Activated B cell treated with CpG ODN at 0.5 μM for 24 hours (primary cell): ENCODE measurements at regions of chr22 and their contacts with region 1.

Region 1: DNA sequence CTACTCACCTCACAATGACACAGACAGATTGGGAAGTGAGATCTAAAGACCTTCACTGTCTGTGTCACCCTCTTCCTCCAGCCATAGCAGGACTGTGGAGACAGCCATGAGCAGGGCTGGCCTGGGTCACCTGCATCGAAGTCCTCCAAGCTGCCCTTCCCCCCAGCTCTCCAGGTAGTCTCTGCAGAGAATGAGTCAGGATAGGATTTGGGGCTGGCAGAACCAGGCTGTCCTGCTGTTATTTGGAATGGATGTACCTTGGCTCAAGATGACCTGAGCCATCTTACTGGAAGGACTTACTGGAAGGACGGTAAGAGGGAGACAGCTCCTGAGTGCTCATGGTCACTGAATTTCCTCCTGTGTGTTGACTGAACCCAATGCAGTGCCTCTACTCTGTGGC is 29.2 kb downstream of the GGTLC2 start:
- DNase-seq: no peak
- ATAC-seq: no peak
- H3K4me3 Mint-ChIP-seq: no peak overlapping the region
- H3K27ac Mint-ChIP-seq: no peak overlapping the region
- H3K4me1 Mint-ChIP-seq: peaks cover 6% of the 10 kb centered on the region
- H3K27me3 Mint-ChIP-seq: peaks cover 2% of the 10 kb centered on the region
- CTCF ChIP-seq: no peak

Region 2: DNA sequence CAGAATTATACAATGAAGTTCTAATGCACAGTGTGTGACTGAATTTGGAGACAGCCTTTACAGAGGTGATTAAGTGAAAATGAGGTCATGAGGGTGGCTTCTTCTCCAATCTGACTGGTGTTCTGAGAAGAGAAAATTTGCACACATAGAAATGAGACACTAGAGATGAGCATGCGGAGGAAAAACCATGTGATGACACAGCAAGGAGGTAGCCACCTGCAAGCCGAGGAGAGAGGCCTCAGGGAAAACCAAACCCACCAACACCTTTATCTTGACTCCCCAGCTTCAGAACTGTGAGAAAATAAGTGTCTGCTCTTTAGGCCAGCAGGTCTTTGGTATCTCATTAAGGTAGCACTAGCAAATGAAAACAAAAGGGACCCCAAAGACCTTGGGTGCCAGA is 64.0 kb after region 1 on chr22:
- CTCF ChIA-PET with region 1: no interaction called
- POLR2A ChIA-PET with region 1: no interaction called
- intact Hi-C with region 1: loop called (anchors 2 kb)
- DNase-seq: no peak
- ATAC-seq: no peak
- H3K4me3 Mint-ChIP-seq: no peak overlapping the region
- H3K27ac Mint-ChIP-seq: no peak overlapping the region
- H3K4me1 Mint-ChIP-seq: peaks cover 4% of the 10 kb centered on the region
- H3K27me3 Mint-ChIP-seq: peaks cover 18% of the 10 kb centered on the region
- CTCF ChIP-seq: no peak